ENCODE measurements at regions of chr12 and their contacts with region 1.

Region 1: DNA sequence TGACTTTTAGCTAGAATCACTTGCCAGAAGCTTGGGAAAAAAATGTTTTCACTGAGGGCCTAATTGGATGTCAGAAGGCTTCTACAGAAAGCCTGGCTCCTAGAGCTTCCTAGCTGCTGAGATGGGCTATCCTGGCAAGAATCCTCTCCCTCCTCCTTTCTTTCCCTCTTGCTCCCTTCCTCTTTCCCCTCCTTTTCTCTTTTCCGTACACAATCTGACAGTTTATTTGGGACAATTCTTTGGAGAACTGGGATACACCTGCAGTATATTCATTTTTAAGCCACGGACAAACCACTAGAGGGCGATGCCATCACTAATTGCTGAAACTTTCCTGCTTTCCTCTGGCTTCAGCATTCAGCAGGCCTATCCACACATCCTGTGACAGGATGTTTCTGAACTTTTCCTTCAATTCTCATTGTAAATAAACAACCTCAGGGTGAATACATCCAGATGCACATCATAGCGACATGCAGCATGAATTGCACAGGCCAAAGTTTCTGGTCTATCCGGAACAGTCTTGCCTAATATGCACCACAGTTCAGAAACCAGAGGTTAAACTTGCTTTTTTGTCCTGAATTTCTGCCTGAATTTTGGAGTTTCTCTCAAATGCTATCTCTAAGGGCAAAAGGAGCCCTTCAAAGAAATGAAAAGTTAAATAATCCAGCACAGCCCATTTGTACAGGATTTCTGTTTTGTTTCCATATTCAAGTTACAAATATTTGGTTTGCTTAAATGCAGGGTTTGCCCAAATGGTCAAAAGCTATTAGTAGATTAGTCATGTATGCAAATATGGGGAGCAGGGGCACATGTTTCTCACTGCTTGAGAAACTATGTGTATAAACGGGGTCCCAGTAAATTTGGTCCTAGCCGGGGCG is 142.8 kb downstream of the PAWR start:
- DNase-seq: no peak
- H3K4me3 ChIP-seq: no peak overlapping the region
- H3K27ac ChIP-seq: peak overlapping the region; percentile 89
- H3K27me3 ChIP-seq: no peaks in the 10 kb centered on the region
- CTCF ChIP-seq: peak; percentile 78

Region 2: GRCh38 chr12:79407671-79408622 is 140.0 kb before region 1 on chr12:
- CTCF ChIA-PET with region 1: interaction called, 19 read pairs
- POLR2A ChIA-PET with region 1: no interaction called
- DNase-seq: peak; percentile 81
- H3K4me3 ChIP-seq: no peak overlapping the region
- H3K27ac ChIP-seq: peak overlapping the region; percentile 22
- H3K27me3 ChIP-seq: no peaks in the 10 kb centered on the region
- CTCF ChIP-seq: peak; percentile 91